Activated T-helper 2 cell treated with anti-CD3 and anti-CD28 coated beads, Interferon-gamma antibody, Interleukin-2, Interleukin-4, amounts not matched to agents 10 μg/mL and 5 μg/mL and 100 μg/mL, durations not matched to agents 14 hours and 24 hours and 36 hours (primary cell): ENCODE measurements at regions of chr1 and their contacts with region 1.

Region 1: GRCh38 chr1:96338622-96339021 is 383.0 kb upstream of the PTBP2 start:
- DNase-seq: no peak
- H3K4me3 Mint-ChIP-seq: no peak overlapping the region
- H3K27ac Mint-ChIP-seq: no peak overlapping the region
- H3K4me1 Mint-ChIP-seq: peaks cover 7% of the 10 kb centered on the region
- H3K27me3 Mint-ChIP-seq: no peaks in the 10 kb centered on the region

Region 2: DNA sequence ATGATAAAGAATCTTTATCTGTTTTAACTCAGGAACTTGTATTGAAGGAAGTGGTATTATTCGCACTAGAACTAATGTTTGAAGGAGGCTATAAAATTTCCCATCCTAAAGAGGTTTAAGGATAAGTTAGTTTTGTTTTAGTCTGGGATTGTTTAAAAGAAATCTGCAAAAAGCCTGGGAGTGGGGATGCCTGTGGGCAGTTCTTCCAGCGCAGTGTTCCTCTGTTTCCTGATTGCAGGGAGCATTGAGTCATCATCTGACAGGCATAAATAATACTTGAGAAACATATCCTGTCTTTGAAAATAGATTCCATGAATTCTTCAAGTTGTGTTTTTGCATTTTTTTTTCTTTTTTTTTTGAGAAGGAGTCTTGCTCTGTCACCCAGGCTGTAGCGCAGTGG is 32.1 kb after region 1 on chr1:
- intact Hi-C with region 1: loop called (anchors 5 kb)
- DNase-seq: no peak
- H3K4me3 Mint-ChIP-seq: no peak overlapping the region
- H3K27ac Mint-ChIP-seq: no peak overlapping the region
- H3K4me1 Mint-ChIP-seq: no peaks in the 10 kb centered on the region
- H3K27me3 Mint-ChIP-seq: no peaks in the 10 kb centered on the region